Astrocyte of the cerebellum (primary cell): ENCODE measurements at regions of chr15 and their contacts with region 1.

Region 1: GRCh38 chr15:74950078-74951000 is 6.2 kb downstream of the RPP25 start:
- DNase-seq: peak; percentile 53
- H3K4me3 ChIP-seq: no peak overlapping the region
- CTCF ChIP-seq: peak; percentile 99

Region 2: GRCh38 chr15:74768771-74769342 is 181.5 kb before region 1 on chr15:
- in situ Hi-C with region 1: loop called (anchors 5 kb)
- DNase-seq: no peak
- H3K4me3 ChIP-seq: no peak overlapping the region
- CTCF ChIP-seq: peak; percentile 75

Region 3: GRCh38 chr15:74906446-74907162 is 43.7 kb before region 1 on chr15 and contains the start of gene FAM219B:
- in situ Hi-C with region 1: loop called (anchors 5 kb)
- DNase-seq: peak; percentile 63
- H3K4me3 ChIP-seq: peak within 1 kb of the TSS; percentile 86
- CTCF ChIP-seq: no peak

Region 4: GRCh38 chr15:75008629-75009326 is 58.4 kb after region 1 on chr15:
- in situ Hi-C with region 1: no loop called
- DNase-seq: no peak
- H3K4me3 ChIP-seq: no peak overlapping the region
- CTCF ChIP-seq: no peak